HepG2 (cell line): ENCODE measurements at regions of chr5 and their contacts with region 1.

Region 1: GRCh38 chr5:72179028-72179815 is 71.9 kb downstream of the MAP1B start:
- DNase-seq: no peak
- ATAC-seq: no peak
- H3K4me3 ChIP-seq: no peak overlapping the region
- H3K27ac ChIP-seq: no peak overlapping the region
- H3K4me1 ChIP-seq: no peaks in the 10 kb centered on the region
- H3K27me3 ChIP-seq: no peaks in the 10 kb centered on the region
- CTCF ChIP-seq: no peak
- EP300 ChIP-seq: no peak
- POLR2A ChIP-seq: no peak
- RAD21 ChIP-seq: no peak

Region 2: DNA sequence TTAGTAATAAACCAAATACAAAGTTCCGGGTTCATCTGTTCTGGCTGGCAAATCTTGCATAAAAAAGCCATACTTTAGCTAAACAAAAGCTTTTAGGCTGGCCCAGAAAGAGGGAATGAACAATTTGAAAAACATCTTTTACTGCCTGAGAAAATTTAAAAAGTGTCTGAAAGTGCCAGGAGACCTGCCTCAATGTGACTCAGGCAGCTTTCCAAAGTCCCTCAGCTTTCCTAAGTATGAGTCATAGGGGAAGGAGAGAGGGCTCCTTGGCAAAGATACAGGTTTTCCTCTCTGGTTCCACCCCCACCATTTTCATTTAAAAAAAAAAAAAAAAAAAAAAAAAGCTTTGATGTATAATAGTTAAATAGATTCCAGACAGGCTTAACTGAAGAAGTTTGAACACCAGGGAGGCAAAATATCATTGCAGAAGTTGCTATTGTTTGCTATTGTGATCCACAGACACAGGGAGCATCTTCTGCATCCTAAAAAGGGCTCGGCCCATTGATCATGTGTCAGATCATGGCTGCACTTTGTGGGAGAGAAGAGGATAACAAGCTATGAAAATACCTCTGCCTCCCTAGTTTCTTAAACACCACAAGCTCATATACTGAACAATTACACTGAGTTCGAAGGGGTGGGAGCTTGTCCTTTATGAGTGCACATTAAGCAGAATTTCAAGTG is 69.3 kb after region 1 on chr5:
- CTCF ChIA-PET with region 1: no interaction called
- POLR2A ChIA-PET with region 1: no interaction called
- in situ Hi-C with region 1: no loop called
- intact Hi-C with region 1: no loop called
- DNase-seq: no peak
- ATAC-seq: no peak
- H3K4me3 ChIP-seq: no peak overlapping the region
- H3K27ac ChIP-seq: no peak overlapping the region
- H3K4me1 ChIP-seq: peaks cover 63% of the 10 kb centered on the region
- H3K27me3 ChIP-seq: no peaks in the 10 kb centered on the region
- CTCF ChIP-seq: no peak
- EP300 ChIP-seq: no peak
- POLR2A ChIP-seq: no peak
- RAD21 ChIP-seq: no peak

Region 3: GRCh38 chr5:72687288-72687687 is 508.1 kb after region 1 on chr5:
- CTCF ChIA-PET with region 1: no interaction called
- POLR2A ChIA-PET with region 1: no interaction called
- in situ Hi-C with region 1: no loop called
- intact Hi-C with region 1: loop called (anchors 5 kb)
- DNase-seq: no peak
- ATAC-seq: no peak
- H3K4me3 ChIP-seq: no peak overlapping the region
- H3K27ac ChIP-seq: no peak overlapping the region
- H3K4me1 ChIP-seq: no peaks in the 10 kb centered on the region
- H3K27me3 ChIP-seq: peaks cover 0 to 8% of the 10 kb centered on the region in 2 experiments; a peak in 3 of 5 replicates
- CTCF ChIP-seq: no peak
- EP300 ChIP-seq: no peak
- POLR2A ChIP-seq: no peak
- RAD21 ChIP-seq: no peak